Mucosa of descending colon (tissue), 3 donors: ENCODE measurements at regions of chr21 and their contacts with region 1.

Region 1: DNA sequence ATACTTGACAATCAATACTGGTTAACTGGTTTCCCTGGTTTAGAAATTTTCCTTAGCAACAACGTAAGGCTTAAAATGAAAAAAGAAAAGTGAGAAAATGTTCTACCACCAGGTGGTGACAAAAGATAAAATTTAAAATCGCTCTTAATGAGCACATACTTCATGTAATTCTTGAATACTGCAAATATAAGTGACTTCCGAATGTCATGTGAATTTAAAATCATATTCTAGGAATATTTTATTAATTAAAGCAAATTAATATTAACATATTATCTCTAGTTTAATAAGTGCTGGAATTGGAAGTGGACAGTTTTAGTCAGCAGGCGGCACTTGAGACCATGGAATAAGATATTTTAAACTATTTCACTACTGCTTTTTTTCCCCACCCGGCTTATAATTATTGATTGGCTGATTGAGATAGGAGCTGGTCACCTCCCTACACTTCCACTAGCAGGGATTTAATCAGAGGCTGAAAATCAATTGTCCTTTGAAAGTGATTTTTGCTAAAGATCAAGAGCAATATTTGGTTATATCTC is 5.0 kb upstream of the ADAMTS1 start:
- DNase-seq: no peak
- ATAC-seq: no peak
- H3K4me3 ChIP-seq: no peak overlapping the region
- H3K4me1 ChIP-seq: peaks cover 6% of the 10 kb centered on the region
- CTCF ChIP-seq: peak; percentile 12

Region 2: GRCh38 chr21:26751305-26751704 is 98.9 kb before region 1 on chr21:
- intact Hi-C with region 1: no loop called
- DNase-seq: no peak
- ATAC-seq: no peak
- H3K4me3 ChIP-seq: no peak overlapping the region
- H3K4me1 ChIP-seq: no peaks in the 10 kb centered on the region
- CTCF ChIP-seq: no peak

Region 3: GRCh38 chr21:27700974-27701614 is 850.9 kb after region 1 on chr21:
- intact Hi-C with region 1: loop called (anchors 2 to 5 kb)
- DNase-seq: peak; percentile 62 to 91 (median 83)
- ATAC-seq: peak; percentile 92
- H3K4me3 ChIP-seq: no peak overlapping the region
- H3K4me1 ChIP-seq: no peaks in the 10 kb centered on the region
- CTCF ChIP-seq: peak; percentile 61

Region 4: DNA sequence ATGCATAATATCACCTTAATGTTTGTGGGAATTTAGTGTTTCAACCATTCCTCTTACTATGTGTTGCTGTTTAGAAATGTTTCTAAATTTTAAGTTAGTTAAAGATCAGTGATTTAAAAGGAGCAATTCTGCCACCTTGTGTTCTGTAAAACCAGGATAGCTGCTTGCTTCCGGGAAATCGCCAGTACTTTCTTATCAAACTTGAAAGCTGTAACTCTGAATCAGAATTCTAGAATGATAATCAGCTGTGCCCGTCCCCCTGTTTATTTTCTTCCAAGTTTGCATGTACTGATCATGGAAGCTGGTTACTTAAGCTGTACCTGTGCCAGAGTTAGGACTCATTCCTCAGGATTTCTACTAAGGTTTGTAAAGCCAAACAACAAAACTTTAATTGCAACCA is 1486.1 kb after region 1 on chr21:
- intact Hi-C with region 1: loop called in 1 of 2 experiments (anchors 10 kb)
- DNase-seq: peak in 1 of 3 donors; percentile 27
- ATAC-seq: no peak
- H3K4me3 ChIP-seq: no peak overlapping the region
- H3K4me1 ChIP-seq: no peaks in the 10 kb centered on the region
- CTCF ChIP-seq: no peak